Gastrocnemius medialis (tissue), 4 donors: ENCODE measurements at regions of chr9 and their contacts with region 1.

Region 1: DNA sequence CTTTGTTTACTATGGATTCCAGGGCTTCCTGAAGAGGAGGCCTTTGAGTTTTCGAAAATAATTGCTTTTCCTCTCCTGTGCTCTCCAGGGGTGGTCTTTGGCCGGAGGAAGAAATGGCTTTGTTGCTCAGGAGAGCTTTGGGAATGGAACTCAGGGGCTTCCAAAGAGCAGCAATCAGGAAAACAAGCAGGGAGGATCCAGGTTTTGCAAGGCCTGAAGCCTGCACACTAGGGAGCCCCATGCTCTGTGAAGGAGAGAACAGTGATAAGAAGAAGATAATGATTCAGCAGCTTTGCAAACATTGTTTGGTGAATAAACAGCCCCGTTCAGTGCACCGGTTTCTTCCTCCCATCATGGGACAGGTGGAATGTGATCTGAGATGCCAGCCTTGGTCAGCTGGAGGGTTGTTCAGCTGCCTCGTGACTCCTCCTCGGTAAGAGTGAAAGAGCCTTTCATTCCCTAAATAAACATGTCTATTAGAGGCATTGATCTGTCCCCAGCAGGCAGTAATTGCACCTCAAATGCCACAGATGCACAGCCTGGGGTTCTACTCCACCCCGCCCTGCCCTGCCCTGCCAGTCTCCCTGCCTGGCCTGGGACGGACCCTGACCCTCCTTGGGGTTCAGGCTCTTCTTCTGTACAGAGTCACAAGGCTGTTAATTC is 11.5 kb upstream of the ALDH1B1 start:
- DNase-seq: peak; percentile 62 to 67
- ATAC-seq: peak; percentile 57 to 71
- H3K4me3 ChIP-seq: no peak overlapping the region
- H3K27ac ChIP-seq: peak overlapping the region; percentile 82 to 94 (median 90)
- H3K4me1 ChIP-seq: peaks cover 30% of the 10 kb centered on the region in 2 donors
- H3K27me3 ChIP-seq: no peaks in the 10 kb centered on the region
- CTCF ChIP-seq: no peak
- POLR2A ChIP-seq: no peak

Region 2: DNA sequence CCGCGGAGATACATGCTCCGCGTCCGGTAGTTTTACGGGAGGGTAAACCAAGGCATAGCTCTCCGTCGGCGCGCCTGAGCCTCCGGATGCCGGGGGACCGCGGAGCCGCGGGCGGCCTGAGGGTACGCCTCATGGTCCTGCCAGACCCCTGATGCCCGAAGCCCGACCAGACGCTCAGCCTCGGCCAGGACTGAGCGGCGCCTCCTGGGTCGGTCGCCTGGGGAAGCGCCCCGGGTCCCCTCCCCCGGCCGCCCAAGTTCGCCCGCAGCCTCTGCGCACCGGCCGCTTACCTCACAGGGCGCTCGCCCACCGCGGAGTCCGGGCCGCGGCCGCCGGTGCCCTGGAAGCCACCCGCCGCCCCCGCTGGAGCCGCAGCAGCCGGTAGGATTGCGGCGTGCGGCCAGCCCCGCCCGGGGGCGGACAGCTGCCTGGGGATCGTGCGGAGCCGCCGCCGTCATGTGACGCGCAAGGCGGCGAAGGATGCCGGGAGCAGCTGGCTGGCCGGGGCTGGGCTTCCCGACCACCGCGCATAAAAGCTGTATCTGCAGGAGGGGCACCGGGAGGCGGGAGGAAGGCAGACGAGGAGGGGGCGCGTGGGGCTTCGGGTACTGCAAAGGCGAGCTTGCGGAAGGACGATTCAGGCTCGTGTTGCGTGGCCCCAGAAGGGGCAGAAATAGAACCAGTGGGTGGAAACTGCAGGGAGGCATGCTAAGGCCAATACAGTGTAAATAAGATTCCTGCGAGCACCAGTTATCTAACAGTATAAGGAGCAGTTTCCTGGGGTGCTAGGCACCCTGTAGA is 804.9 kb before region 1 on chr9 and contains the start of gene FBXO10:
- in situ Hi-C with region 1: loop called in 1 of 4 experiments (anchors 25 kb)
- intact Hi-C with region 1: loop called (anchors 10 kb)
- DNase-seq: peak; percentile 53 to 72
- ATAC-seq: peak; percentile 62 to 71
- H3K4me3 ChIP-seq: peak within 1 kb of the TSS; percentile 84 to 96 (median 93)
- H3K27ac ChIP-seq: peak within 1 kb of the TSS; percentile 94 to 99 (median 98)
- H3K4me1 ChIP-seq: peaks cover 35 to 42% of the 10 kb centered on the region in 2 donors
- H3K27me3 ChIP-seq: no peaks in the 10 kb centered on the region
- CTCF ChIP-seq: peak in 1 of 5 experiments; percentile 24
- POLR2A ChIP-seq: peak; percentile 95 to 96
- total RNA-seq, gene FBXO10: 49.8 to 62.2 (median 53.5) TPM

Region 3: GRCh38 chr9:38017149-38017884 is 363.7 kb before region 1 on chr9:
- in situ Hi-C with region 1: no loop called
- intact Hi-C with region 1: loop called (anchors 1 kb)
- DNase-seq: peak; percentile 53 to 74
- ATAC-seq: peak; percentile 91 to 92
- H3K4me3 ChIP-seq: peak overlapping the region; percentile 16 to 30 (median 21)
- H3K27ac ChIP-seq: peak overlapping the region in 2 of 4 donors; percentile 20 to 26
- H3K4me1 ChIP-seq: peaks cover 29 to 39% of the 10 kb centered on the region in 2 donors
- H3K27me3 ChIP-seq: no peaks in the 10 kb centered on the region
- CTCF ChIP-seq: peak; percentile 39 to 67 (median 58)
- POLR2A ChIP-seq: no peak

Region 4: GRCh38 chr9:38079461-38080031 is 301.5 kb before region 1 on chr9:
- in situ Hi-C with region 1: loop called in 2 of 4 experiments (anchors 10 kb)
- intact Hi-C with region 1: no loop called
- DNase-seq: peak; percentile 54 to 71
- ATAC-seq: peak; percentile 86 to 87
- H3K4me3 ChIP-seq: no peak overlapping the region
- H3K27ac ChIP-seq: peak overlapping the region in 1 of 4 donors; percentile 44
- H3K4me1 ChIP-seq: peaks cover 0 to 9% of the 10 kb centered on the region in 2 donors
- H3K27me3 ChIP-seq: no peaks in the 10 kb centered on the region
- CTCF ChIP-seq: no peak
- POLR2A ChIP-seq: no peak

Region 5: GRCh38 chr9:38392235-38393127 is 11.5 kb after region 1 on chr9 and contains the start of gene ALDH1B1:
- in situ Hi-C with region 1: no loop called
- intact Hi-C with region 1: loop called (anchors 2 kb)
- DNase-seq: peak; percentile 78 to 79
- ATAC-seq: peak; percentile 84 to 88
- H3K4me3 ChIP-seq: peak within 1 kb of the TSS; percentile 65 to 82 (median 76)
- H3K27ac ChIP-seq: peak within 1 kb of the TSS; percentile 69 to 88 (median 82)
- H3K4me1 ChIP-seq: peaks cover 20 to 25% of the 10 kb centered on the region in 2 donors
- H3K27me3 ChIP-seq: no peaks in the 10 kb centered on the region
- CTCF ChIP-seq: peak in 2 of 5 experiments; percentile 10 to 26
- POLR2A ChIP-seq: peak; percentile 40 to 79
- total RNA-seq, gene ALDH1B1: 21.0 to 50.9 (median 36.0) TPM